Motor neuron (in vitro differentiated cells): ENCODE measurements at regions of chr1 and their contacts with region 1.

Region 1: DNA sequence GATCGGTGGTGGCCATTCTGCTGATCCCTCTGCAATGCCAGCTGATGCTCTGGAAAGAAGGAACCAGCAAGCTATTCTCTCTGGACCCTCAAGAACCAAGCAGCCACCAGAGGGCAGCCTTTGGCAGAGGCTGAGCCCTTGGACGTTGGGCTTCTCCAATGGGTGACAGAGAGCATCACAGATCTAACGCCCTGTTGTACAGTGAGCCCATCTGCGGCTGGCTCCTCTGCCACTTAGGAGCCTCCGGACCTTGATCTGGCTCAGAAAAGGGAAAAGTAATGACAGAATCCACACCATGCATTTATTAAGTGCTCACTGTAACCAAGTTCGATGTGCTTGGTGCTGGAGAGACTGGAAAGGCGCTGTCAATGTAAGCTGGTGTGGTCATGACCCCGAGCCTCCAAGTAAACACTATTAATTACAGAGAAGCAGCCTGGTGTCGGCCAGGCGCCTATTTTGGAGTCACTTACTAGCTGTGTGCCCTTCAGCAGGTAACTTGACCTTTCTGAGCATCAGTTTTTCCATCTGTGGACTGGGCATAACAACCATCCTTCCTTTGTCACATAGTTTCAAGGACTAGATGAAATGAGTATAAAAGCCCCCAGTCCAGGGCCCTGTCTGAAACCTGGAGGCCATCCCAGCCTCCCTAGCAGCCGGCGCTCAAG is 34.9 kb downstream of the ECE1 start:
- ATAC-seq: peak; percentile 79 to 99 (median 97)
- H3K4me3 ChIP-seq: no peak overlapping the region
- H3K27ac ChIP-seq: no peak overlapping the region
- H3K4me1 ChIP-seq: peaks cover 0 to 5% of the 10 kb centered on the region in 2 donors

Region 2: GRCh38 chr1:20896871-20897223 is 358.6 kb before region 1 on chr1:
- in situ Hi-C with region 1: no loop called
- ATAC-seq: peak in 3 of 8 experiments; percentile 25 to 35 (median 32)
- H3K4me3 ChIP-seq: no peak overlapping the region
- H3K27ac ChIP-seq: no peak overlapping the region
- H3K4me1 ChIP-seq: no peaks in the 10 kb centered on the region

Region 3: GRCh38 chr1:21344750-21345443 is 89.5 kb after region 1 on chr1:
- in situ Hi-C with region 1: loop called in 1 of 9 experiments (anchors 10 kb)
- ATAC-seq: peak in 6 of 8 experiments; percentile 39 to 63 (median 48)
- H3K4me3 ChIP-seq: peak overlapping the region; percentile 66 to 78 (median 73)
- H3K27ac ChIP-seq: no peak overlapping the region
- H3K4me1 ChIP-seq: peaks cover 0 to 39% of the 10 kb centered on the region in 2 donors

Region 4: GRCh38 chr1:21490774-21491553 is 235.6 kb after region 1 on chr1:
- in situ Hi-C with region 1: loop called in 1 of 9 experiments (anchors 25 kb)
- ATAC-seq: peak in 6 of 8 experiments; percentile 39 to 94 (median 84)
- H3K4me3 ChIP-seq: no peak overlapping the region
- H3K27ac ChIP-seq: no peak overlapping the region
- H3K4me1 ChIP-seq: peaks cover 0 to 10% of the 10 kb centered on the region in 2 donors